CD4-positive, alpha-beta T cell (primary cell): ENCODE measurements at regions of chr2 and their contacts with region 1.

Region 1: GRCh38 chr2:6909431-6910385 is 7.5 kb upstream of the RNF144A start:
- DNase-seq: peak in 6 of 14 experiments; percentile 15 to 90 (median 63)
- ATAC-seq: peak; percentile 64
- H3K4me3 ChIP-seq: peak overlapping the region; percentile 23
- H3K4me3 Mint-ChIP-seq: peak overlapping the region; percentile 62
- H3K27ac ChIP-seq: peak overlapping the region; percentile 38 to 63
- H3K27ac Mint-ChIP-seq: peak overlapping the region; percentile 85
- H3K4me1 ChIP-seq: peaks cover 82% of the 10 kb centered on the region
- H3K4me1 Mint-ChIP-seq: peaks cover 86% of the 10 kb centered on the region
- H3K27me3 ChIP-seq: no peaks in the 10 kb centered on the region
- H3K27me3 Mint-ChIP-seq: no peaks in the 10 kb centered on the region
- CTCF ChIP-seq: no peak

Region 2: DNA sequence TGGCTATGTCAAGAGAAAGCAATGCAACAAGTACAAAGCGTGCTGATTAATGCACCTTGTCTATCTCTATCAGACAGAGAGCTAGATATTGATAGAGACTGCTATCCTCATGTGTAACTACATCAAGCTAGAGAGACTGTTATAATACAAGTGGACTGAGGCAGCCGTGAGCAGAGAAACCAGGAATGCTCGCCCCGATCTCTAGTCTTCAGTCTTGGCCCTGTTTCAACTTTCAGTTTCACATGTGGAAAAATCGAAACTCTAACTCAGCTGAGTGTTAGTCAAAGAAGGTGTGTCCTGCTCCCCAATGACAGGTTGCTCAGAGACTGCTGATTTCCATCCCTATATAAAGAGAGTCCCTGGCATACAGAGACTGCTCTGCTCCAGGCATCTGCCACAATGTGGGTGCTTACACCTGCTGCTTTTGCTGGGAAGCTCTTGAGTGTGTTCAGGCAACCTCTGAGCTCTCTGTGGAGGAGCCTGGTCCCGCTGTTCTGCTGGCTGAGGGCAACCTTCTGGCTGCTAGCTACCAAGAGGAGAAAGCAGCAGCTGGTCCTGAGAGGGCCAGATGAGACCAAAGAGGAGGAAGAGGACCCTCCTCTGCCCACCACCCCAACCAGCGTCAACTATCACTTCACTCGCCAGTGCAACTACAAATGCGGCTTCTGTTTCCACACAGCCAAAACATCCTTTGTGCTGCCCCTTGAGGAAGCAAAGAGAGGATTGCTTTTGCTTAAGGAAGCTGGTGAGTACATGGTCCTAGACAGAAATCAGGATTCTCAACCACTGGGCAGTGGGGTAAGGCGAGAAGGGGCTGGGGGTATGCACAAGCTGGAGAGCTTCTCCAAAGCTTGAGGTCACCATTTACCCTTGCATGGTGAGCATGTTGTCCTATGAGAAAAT is 32.1 kb before region 1 on chr2 and contains the start of gene RSAD2:
- CTCF ChIA-PET with region 1: no interaction called
- POLR2A ChIA-PET with region 1: interaction called, 15 read pairs
- intact Hi-C with region 1: loop called in 1 of 2 experiments (anchors 5 kb)
- DNase-seq: peak in 9 of 14 experiments; percentile 8 to 81 (median 62)
- ATAC-seq: peak; percentile 82
- H3K4me3 ChIP-seq: peak within 1 kb of the TSS; percentile 56
- H3K4me3 Mint-ChIP-seq: peak within 1 kb of the TSS; percentile 90
- H3K27ac ChIP-seq: peak within 1 kb of the TSS; percentile 18 to 31
- H3K27ac Mint-ChIP-seq: peak within 1 kb of the TSS; percentile 92
- H3K4me1 ChIP-seq: peaks cover 25% of the 10 kb centered on the region
- H3K4me1 Mint-ChIP-seq: peaks cover 78% of the 10 kb centered on the region
- H3K27me3 ChIP-seq: no peaks in the 10 kb centered on the region
- H3K27me3 Mint-ChIP-seq: no peaks in the 10 kb centered on the region
- CTCF ChIP-seq: no peak
- total RNA-seq, gene RSAD2: 3.9 to 4.6 TPM

Region 3: DNA sequence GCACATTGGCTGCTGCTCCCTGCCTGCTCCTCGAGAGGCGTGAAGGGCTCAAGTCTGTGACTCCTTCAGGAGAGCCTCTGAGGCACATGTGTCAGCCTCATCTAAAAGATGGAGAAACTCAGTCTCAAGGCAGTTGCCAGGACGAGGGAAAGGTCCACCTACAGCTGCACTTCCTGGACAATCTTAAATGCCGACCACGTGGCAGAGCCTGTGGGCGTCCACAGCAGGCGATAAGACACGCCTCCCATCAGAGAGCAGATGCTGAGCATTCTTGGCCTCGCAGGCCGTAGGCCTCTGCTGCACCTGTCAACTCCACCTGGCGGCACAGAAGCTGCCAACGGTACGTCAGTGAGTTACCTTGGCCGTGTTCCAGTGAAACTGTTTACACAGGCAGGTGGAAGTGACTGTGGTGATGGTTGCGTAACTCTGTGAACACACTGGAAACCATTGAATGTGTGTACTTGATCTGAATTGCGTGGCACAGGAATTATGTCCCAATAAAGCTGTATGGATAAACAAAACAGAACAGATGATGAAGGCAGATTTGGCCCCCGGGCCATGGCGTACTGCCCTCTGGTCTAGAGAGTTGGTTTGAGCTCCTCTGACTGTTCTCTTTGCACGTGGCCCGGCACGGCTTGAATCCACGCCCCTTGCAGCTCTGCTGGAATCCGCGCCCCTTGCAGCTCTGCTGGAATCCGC is 122.0 kb after region 1 on chr2:
- CTCF ChIA-PET with region 1: no interaction called
- POLR2A ChIA-PET with region 1: interaction called, 6 read pairs
- intact Hi-C with region 1: loop called in 1 of 2 experiments (anchors 5 kb)
- DNase-seq: peak; percentile 45 to 91 (median 61)
- ATAC-seq: peak; percentile 98
- H3K4me3 ChIP-seq: no peak overlapping the region
- H3K4me3 Mint-ChIP-seq: no peak overlapping the region
- H3K27ac ChIP-seq: no peak overlapping the region
- H3K27ac Mint-ChIP-seq: peak overlapping the region; percentile 89
- H3K4me1 ChIP-seq: peaks cover 17% of the 10 kb centered on the region
- H3K4me1 Mint-ChIP-seq: peaks cover 16% of the 10 kb centered on the region
- H3K27me3 ChIP-seq: no peaks in the 10 kb centered on the region
- H3K27me3 Mint-ChIP-seq: no peaks in the 10 kb centered on the region
- CTCF ChIP-seq: peak; percentile 28

Region 4: GRCh38 chr2:7146151-7146550 is 236.4 kb after region 1 on chr2:
- CTCF ChIA-PET with region 1: no interaction called
- POLR2A ChIA-PET with region 1: no interaction called
- intact Hi-C with region 1: no loop called
- DNase-seq: no peak
- ATAC-seq: no peak
- H3K4me3 ChIP-seq: no peak overlapping the region
- H3K4me3 Mint-ChIP-seq: no peak overlapping the region
- H3K27ac ChIP-seq: no peak overlapping the region
- H3K27ac Mint-ChIP-seq: no peak overlapping the region
- H3K4me1 ChIP-seq: no peaks in the 10 kb centered on the region
- H3K4me1 Mint-ChIP-seq: no peaks in the 10 kb centered on the region
- H3K27me3 ChIP-seq: no peaks in the 10 kb centered on the region
- H3K27me3 Mint-ChIP-seq: no peaks in the 10 kb centered on the region
- CTCF ChIP-seq: no peak